Ovary (tissue), 10 donors: ENCODE measurements at regions of chr1 and their contacts with region 1.

Region 1: GRCh38 chr1:111619635-111620440 is at the start of gene RAP1A:
- DNase-seq: peak; percentile 94 to 97 (median 97)
- H3K4me3 ChIP-seq: peak within 1 kb of the TSS; percentile 98
- H3K27ac ChIP-seq: peak within 1 kb of the TSS; percentile 95 to 96
- H3K4me1 ChIP-seq: peaks cover 13% of the 10 kb centered on the region
- H3K27me3 ChIP-seq: no peaks in the 10 kb centered on the region
- CTCF ChIP-seq: no peak
- EP300 ChIP-seq: no peak
- POLR2A ChIP-seq: peak; percentile 56
- total RNA-seq, gene RAP1A: 22.2 to 67.6 (median 59.1) TPM

Region 2: DNA sequence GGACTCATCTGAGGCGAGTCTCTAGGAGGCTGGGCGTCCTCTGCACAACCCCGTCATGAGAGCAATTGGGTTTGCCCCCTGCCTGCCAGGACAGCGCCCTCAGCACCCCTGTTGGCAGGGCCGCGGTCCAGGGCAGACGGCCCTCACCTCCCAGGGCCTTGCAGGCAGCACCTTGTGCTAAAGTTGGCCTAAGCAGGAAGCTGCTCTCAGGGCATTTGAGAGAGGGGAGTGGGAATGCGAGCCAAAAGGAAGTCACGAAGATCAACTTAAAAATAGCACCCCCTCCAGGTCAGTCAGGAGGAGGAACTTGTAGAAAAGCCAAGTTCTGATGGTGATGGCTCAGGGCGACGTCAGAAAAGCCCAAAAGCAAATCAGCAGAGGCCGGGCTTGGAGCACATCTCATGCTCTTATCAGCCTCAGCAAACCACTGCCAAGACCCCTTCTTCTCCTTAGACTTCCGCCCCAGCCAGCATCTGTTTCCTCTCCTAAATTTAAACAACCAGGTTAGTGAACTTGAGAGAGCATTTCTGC is 103.8 kb before region 1 on chr1:
- intact Hi-C with region 1: loop called in 1 of 4 experiments (anchors 10 kb)
- DNase-seq: peak; percentile 64 to 72 (median 69)
- H3K4me3 ChIP-seq: peak overlapping the region; percentile 25
- H3K27ac ChIP-seq: peak overlapping the region; percentile 44 to 53
- H3K4me1 ChIP-seq: peaks cover 13% of the 10 kb centered on the region
- H3K27me3 ChIP-seq: no peaks in the 10 kb centered on the region
- CTCF ChIP-seq: peak in 1 of 3 donors; percentile 36
- EP300 ChIP-seq: no peak
- POLR2A ChIP-seq: no peak

Region 3: DNA sequence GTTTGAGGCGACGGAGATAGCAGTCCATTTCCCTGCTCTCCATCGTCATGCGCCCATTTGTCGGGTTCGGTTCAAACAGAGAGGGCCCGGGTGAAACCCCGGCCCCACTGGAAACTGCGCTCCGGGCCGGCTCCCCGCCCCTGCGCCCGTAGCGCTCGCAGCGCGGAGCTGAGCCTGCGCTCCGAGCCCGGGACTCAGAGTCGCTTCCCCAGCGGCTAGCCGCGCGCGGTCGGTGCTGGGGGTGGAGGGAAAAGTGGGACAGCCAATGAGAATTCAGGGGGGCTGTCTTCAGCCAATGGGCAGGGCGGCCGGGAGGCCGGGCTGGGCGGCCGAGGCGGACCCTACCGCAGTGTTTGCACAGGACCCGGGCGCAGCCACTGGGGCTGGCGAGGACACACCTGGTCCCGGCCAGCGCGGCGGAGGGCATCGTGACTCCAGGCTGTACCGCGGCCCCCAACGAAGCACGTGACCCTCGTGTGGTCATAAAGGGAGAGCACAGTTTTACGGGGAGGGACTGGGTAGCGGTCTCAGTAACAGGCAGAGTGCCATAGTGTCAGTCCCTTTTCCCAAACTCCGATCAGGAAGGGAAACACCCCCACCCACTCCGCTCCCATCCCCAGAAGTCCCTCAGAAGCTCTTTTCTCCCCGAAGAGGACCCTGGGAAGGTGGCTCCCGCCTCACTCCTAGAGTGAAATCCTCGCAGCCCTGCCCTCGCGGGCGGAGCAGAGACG is 119.5 kb after region 1 on chr1 and contains the start of gene INKA2:
- intact Hi-C with region 1: loop called in 1 of 4 experiments (anchors 10 kb)
- DNase-seq: peak; percentile 86 to 88 (median 87)
- H3K4me3 ChIP-seq: peak within 1 kb of the TSS; percentile 47
- H3K27ac ChIP-seq: peak within 1 kb of the TSS; percentile 65 to 79
- H3K4me1 ChIP-seq: peaks cover 13% of the 10 kb centered on the region
- H3K27me3 ChIP-seq: no peaks in the 10 kb centered on the region
- CTCF ChIP-seq: peak in 2 of 3 donors; percentile 10 to 21
- EP300 ChIP-seq: no peak
- POLR2A ChIP-seq: peak; percentile 47
- total RNA-seq, gene INKA2: 2.9 to 22.2 (median 10.5) TPM